Activated naive CD4-positive, alpha-beta T cell treated with anti-CD3 and anti-CD28 coated beads, Interleukin-2, amount 10 ng/mL, durations not matched to agents 7 days and 5 days (primary cell): ENCODE measurements at regions of chr19 and their contacts with region 1.

Region 1: GRCh38 chr19:40750059-40750873 is at the start of gene ACTMAP:
- DNase-seq: peak; percentile 100
- H3K4me3 Mint-ChIP-seq: peak within 1 kb of the TSS; percentile 100
- H3K27ac Mint-ChIP-seq: peak within 1 kb of the TSS; percentile 99
- H3K4me1 Mint-ChIP-seq: peaks cover 48% of the 10 kb centered on the region
- H3K27me3 Mint-ChIP-seq: no peaks in the 10 kb centered on the region

Region 2: GRCh38 chr19:40685563-40685962 is 64.7 kb before region 1 on chr19:
- CTCF ChIA-PET with region 1: no interaction called
- DNase-seq: no peak
- H3K4me3 Mint-ChIP-seq: no peak overlapping the region
- H3K27ac Mint-ChIP-seq: no peak overlapping the region
- H3K4me1 Mint-ChIP-seq: no peaks in the 10 kb centered on the region
- H3K27me3 Mint-ChIP-seq: no peaks in the 10 kb centered on the region

Region 3: GRCh38 chr19:40702337-40703012 is 47.8 kb before region 1 on chr19:
- CTCF ChIA-PET with region 1: no interaction called
- DNase-seq: no peak
- H3K4me3 Mint-ChIP-seq: no peak overlapping the region
- H3K27ac Mint-ChIP-seq: no peak overlapping the region
- H3K4me1 Mint-ChIP-seq: no peaks in the 10 kb centered on the region
- H3K27me3 Mint-ChIP-seq: no peaks in the 10 kb centered on the region

Region 4: GRCh38 chr19:40806488-40807468 is 56.5 kb after region 1 on chr19:
- CTCF ChIA-PET with region 1: interaction called, 24 read pairs
- DNase-seq: peak; percentile 86
- H3K4me3 Mint-ChIP-seq: peak overlapping the region; percentile 81
- H3K27ac Mint-ChIP-seq: peak overlapping the region; percentile 96
- H3K4me1 Mint-ChIP-seq: peaks cover 95% of the 10 kb centered on the region
- H3K27me3 Mint-ChIP-seq: peaks cover 14% of the 10 kb centered on the region